Ascending aorta (tissue), 2 donors: ENCODE measurements at regions of chr15 and their contacts with region 1.

Region 1: DNA sequence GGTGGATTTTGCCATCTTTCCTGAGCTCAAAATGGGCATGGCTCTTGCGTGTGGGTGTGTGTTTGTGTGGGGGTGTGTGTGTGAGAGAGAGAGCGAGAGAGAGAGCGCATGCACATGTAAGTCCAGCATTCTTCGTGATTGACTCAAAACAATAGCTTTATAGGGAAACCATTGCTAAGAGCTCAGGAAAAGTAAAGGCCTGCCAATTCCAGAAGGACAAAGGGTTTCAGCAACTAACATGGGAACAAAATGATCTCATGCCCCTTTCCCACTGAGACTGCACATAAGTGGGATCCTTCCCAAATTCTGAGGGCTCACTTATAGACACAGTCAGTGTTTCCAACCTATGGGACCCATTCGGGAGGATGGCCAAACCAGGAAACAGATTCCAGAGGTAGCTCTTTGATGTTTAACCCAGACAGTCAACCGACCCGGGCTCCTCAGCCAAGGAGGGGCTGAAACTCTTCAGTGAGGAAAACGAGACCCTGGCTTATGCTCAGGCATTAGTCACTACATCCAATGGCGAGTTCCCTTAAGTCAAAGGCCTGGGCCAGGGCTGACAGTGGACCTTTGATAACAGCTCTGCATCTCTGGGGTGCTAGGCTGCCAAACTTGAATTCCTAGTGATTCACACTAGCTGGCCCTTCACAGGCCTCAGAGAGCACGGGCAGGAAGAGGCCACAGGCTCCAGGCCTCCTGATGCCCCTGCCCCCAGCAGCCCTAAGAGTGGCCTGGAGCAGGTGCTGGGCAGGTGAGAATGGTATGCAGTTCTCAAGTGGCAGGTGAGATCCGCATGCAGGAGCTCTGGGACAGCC is 305.0 kb upstream of the C2CD4B start:
- DNase-seq: peak in 1 of 2 donors; percentile 93
- H3K4me3 ChIP-seq: peak overlapping the region in 1 of 2 donors; percentile 26
- H3K27ac ChIP-seq: peak overlapping the region; percentile 92 to 98
- H3K4me1 ChIP-seq: peaks cover 37 to 83% of the 10 kb centered on the region in 2 donors
- H3K27me3 ChIP-seq: no peaks in the 10 kb centered on the region
- CTCF ChIP-seq: no peak

Region 2: DNA sequence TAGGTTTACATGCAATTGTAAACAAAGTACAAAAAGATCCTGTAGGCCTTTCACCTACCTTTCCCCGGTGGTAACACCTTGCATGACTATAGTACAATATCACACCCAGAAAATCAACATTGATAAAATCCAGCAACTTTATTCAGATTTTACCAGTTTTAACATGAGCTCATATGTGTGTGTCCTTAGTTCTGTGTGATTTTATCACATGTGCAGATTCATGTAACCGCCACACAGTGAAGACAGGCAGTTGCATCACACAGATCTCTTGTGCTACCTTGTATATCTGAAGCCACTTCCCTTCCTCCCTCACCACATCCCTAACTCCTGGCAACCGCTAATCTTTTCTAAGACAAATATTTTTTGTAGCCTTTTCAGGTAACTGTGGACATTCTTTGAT is 121.5 kb before region 1 on chr15:
- intact Hi-C with region 1: no loop called
- DNase-seq: peak in 1 of 2 donors; percentile 2
- H3K4me3 ChIP-seq: no peak overlapping the region
- H3K27ac ChIP-seq: no peak overlapping the region
- H3K4me1 ChIP-seq: no peaks in the 10 kb centered on the region
- H3K27me3 ChIP-seq: no peaks in the 10 kb centered on the region
- CTCF ChIP-seq: no peak

Region 3: DNA sequence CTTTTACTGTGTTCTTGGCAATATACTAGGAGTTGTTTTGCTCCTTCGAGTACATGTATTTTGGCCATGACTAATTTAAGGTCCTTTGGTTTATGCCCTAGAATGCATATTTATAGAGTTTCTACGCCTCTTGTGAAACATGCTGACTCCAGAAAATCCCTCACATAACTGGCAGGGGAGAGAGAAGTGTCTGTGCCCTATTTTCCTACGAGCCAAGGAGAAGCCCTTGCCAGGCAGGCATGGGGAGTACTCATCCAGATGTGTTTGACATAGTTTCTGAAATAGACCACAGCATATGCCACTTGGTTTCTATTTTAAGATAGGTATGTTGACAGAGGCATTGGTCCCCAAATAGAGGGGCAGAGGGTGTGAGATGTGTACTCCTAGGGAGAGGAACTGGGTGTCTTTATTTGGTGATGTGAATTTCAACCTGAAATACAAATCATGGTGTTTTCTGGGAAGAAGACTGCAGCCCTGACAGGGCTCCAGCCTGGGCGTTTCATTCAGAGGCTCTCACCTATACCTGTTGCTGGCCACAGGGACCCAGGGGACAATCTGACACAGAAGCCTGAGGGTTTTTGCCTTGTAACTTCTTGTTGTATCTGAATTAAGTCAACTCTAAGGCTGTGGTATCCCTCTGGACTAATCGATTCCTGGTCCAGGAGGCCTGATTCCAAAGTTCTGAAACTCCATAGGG is 37.2 kb before region 1 on chr15:
- intact Hi-C with region 1: loop called (anchors 5 kb)
- DNase-seq: peak in 1 of 2 donors; percentile 82
- H3K4me3 ChIP-seq: no peak overlapping the region
- H3K27ac ChIP-seq: peak overlapping the region; percentile 80 to 84
- H3K4me1 ChIP-seq: peaks cover 4 to 40% of the 10 kb centered on the region in 2 donors
- H3K27me3 ChIP-seq: no peaks in the 10 kb centered on the region
- CTCF ChIP-seq: no peak

Region 4: GRCh38 chr15:62455441-62455921 is 14.6 kb before region 1 on chr15:
- intact Hi-C with region 1: loop called (anchors 2 kb)
- DNase-seq: no peak
- H3K4me3 ChIP-seq: no peak overlapping the region
- H3K27ac ChIP-seq: peak overlapping the region; percentile 87 to 92
- H3K4me1 ChIP-seq: peaks cover 10 to 56% of the 10 kb centered on the region in 2 donors
- H3K27me3 ChIP-seq: no peaks in the 10 kb centered on the region
- CTCF ChIP-seq: no peak

Region 5: GRCh38 chr15:62506217-62506805 is 36.2 kb after region 1 on chr15:
- intact Hi-C with region 1: loop called (anchors 5 kb)
- DNase-seq: no peak
- H3K4me3 ChIP-seq: peak overlapping the region in 1 of 2 donors; percentile 30
- H3K27ac ChIP-seq: peak overlapping the region; percentile 84 to 88
- H3K4me1 ChIP-seq: peaks cover 11 to 44% of the 10 kb centered on the region in 2 donors
- H3K27me3 ChIP-seq: no peaks in the 10 kb centered on the region
- CTCF ChIP-seq: no peak

Region 6: GRCh38 chr15:62549345-62549970 is 79.4 kb after region 1 on chr15:
- intact Hi-C with region 1: loop called (anchors 5 kb)
- DNase-seq: no peak
- H3K4me3 ChIP-seq: no peak overlapping the region
- H3K27ac ChIP-seq: peak overlapping the region in 1 of 2 donors; percentile 75
- H3K4me1 ChIP-seq: peaks cover 4 to 52% of the 10 kb centered on the region in 2 donors
- H3K27me3 ChIP-seq: no peaks in the 10 kb centered on the region
- CTCF ChIP-seq: peak in 2 of 3 experiments; percentile 23

Region 7: DNA sequence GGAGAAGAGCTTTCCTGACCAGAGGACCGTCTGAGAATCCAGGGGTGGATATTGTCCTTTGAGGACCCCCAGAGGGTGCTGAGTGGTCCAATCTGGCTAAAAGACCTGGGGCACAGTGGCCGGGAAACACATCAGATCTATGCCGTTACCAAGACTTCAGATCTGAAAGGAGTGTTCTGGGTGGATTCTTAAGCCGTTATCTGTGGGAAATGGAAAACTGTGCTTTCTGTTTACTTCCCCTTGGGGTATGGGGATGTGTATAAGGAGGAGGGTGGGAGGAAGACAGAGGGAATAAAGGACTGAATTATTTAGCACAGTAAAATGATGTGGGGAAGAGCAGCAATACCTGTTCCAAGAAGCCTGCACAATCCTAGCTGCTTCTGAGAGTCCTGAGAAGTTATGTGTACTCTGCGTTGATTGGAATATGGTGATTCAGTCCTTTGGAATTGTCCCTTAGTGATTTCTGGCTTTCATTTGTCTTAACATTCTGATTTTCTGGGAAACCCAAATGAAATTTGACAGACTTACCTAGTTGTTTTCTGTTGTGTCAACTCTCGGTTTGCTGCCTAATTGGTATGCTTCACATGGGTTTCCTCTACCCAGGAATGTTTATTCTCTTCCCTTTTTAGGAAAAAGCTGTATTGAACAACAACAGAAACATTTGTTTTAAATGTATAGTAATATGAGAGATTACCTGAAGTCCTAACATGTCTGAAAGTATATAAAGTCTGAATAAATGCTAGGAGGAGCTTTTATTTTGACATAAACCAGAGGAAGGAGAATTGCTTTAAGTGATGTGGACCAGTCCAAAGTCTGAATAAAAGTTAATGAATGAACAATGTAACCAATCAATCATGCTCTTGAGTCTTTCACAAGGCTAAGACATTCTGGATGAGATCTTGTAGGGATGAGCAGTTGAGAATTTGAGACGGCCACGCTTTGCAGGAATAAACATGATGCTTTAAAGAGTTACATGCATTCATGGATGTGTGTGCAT is 122.1 kb after region 1 on chr15:
- intact Hi-C with region 1: loop called (anchors 1 kb)
- DNase-seq: no peak
- H3K4me3 ChIP-seq: peak overlapping the region in 1 of 2 donors; percentile 16
- H3K27ac ChIP-seq: peak overlapping the region; percentile 76 to 79
- H3K4me1 ChIP-seq: peaks cover 5 to 43% of the 10 kb centered on the region in 2 donors
- H3K27me3 ChIP-seq: no peaks in the 10 kb centered on the region
- CTCF ChIP-seq: no peak